Activated CD8-positive, alpha-beta T cell treated with anti-CD3 and anti-CD28 coated beads, Interleukin-2, amount 10 ng/mL, durations not matched to agents 7 days and 5 days (primary cell): ENCODE measurements at regions of chr1 and their contacts with region 1.

Region 1: DNA sequence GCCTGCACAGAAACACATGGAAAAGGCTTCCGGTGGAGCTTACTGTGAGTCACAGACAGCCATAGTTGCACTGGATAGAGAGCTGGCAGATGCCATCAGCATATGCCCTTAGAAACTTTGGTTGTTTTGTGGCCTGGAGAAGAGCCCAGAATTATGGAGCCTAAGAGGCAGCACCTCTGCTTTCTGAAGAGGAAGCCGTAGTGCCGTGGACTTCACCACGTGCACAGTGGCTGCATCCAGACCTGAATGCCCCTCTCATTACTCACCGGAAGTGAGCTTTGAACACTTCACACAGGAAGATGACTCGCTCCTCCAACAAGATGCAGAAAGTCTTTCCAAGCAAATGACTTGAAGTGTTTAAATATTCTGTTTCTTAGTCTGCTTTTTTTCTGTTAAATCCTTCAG is 28.4 kb downstream of the JUN start:
- DNase-seq: peak; percentile 71
- ATAC-seq: peak; percentile 75
- H3K4me3 Mint-ChIP-seq: peak overlapping the region; percentile 45
- H3K27ac Mint-ChIP-seq: peak overlapping the region; percentile 90
- H3K4me1 Mint-ChIP-seq: peaks cover 50% of the 10 kb centered on the region
- H3K27me3 Mint-ChIP-seq: no peaks in the 10 kb centered on the region

Region 2: DNA sequence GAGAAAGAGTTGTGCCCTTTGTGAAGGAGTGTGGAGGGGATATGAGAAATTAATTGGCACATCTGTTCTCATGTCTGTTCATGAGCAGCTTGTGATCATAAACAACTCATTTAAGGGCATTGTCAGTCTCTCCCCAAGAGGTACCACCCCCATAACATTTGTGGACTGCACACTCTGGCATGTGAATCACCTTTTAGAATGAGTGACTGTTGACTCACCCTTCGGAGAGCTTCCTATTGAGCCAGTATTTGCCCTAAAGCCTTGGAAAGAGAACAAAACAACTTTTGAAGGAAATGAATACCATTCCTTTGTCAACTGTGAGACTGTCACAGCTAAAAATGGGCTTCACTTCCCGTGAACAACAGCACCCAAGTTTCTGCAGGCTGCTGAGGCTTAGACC is 28.1 kb before region 1 on chr1:
- CTCF ChIA-PET with region 1: interaction called, 11 read pairs
- POLR2A ChIA-PET with region 1: no interaction called
- DNase-seq: no peak
- ATAC-seq: no peak
- H3K4me3 Mint-ChIP-seq: no peak overlapping the region
- H3K27ac Mint-ChIP-seq: peak overlapping the region; percentile 83
- H3K4me1 Mint-ChIP-seq: peaks cover 54% of the 10 kb centered on the region
- H3K27me3 Mint-ChIP-seq: no peaks in the 10 kb centered on the region

Region 3: DNA sequence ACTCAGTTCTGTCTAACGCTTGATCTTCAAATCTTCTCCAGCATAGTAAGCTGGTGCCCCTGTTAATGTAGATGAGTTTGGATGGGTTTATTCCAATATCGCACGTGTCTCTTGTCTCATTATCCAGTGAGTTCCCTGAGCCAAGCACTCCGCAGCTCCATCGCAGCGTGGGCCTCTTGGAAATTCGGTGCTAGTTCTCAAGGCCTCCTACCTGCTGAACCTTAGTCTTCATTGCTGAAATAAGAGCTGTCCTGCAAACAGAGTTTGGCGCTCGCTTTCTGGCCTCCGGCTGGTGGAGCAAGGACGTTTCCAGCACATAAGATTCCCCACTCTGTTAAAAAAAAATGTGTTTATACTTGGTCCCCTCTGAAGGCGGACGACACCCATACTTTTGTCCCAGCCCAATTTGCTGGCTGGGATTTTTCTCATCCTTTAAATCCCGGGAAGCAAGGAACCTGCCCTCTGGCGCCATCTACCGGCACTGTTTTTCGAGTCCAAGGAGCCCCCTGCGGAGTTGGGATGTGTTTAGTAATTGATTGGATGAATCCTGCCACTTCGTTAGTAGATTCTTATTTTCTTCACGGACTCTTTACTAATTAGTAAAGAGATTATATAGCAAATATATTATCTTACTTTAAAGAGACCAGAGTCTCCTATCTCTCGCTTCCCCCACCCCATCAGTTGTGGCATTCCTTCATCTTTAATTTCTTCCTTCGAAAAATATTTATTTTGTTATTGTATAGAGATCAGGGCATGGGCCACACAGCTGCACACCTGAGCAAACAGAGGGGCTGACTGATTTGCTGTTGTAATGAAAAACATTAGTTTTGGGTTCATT is 13.7 kb after region 1 on chr1:
- CTCF ChIA-PET with region 1: interaction called, 32 read pairs
- POLR2A ChIA-PET with region 1: interaction called, 4 read pairs
- DNase-seq: peak; percentile 59
- ATAC-seq: no peak
- H3K4me3 Mint-ChIP-seq: no peak overlapping the region
- H3K27ac Mint-ChIP-seq: no peak overlapping the region
- H3K4me1 Mint-ChIP-seq: peaks cover 13% of the 10 kb centered on the region
- H3K27me3 Mint-ChIP-seq: peaks cover 9% of the 10 kb centered on the region

Region 4: GRCh38 chr1:58848818-58849411 is 93.4 kb after region 1 on chr1:
- CTCF ChIA-PET with region 1: no interaction called
- POLR2A ChIA-PET with region 1: no interaction called
- DNase-seq: no peak
- ATAC-seq: no peak
- H3K4me3 Mint-ChIP-seq: no peak overlapping the region
- H3K27ac Mint-ChIP-seq: no peak overlapping the region
- H3K4me1 Mint-ChIP-seq: peaks cover 5% of the 10 kb centered on the region
- H3K27me3 Mint-ChIP-seq: peaks cover 3% of the 10 kb centered on the region